CD4-positive, alpha-beta T cell (primary cell): ENCODE measurements at regions of chr7 and their contacts with region 1.

Region 1: GRCh38 chr7:109622320-109622719 is 1052.6 kb downstream of the DNAJB9 start:
- DNase-seq: no peak
- ATAC-seq: no peak
- H3K4me3 ChIP-seq: no peak overlapping the region
- H3K4me3 Mint-ChIP-seq: no peak overlapping the region
- H3K27ac ChIP-seq: no peak overlapping the region
- H3K27ac Mint-ChIP-seq: no peak overlapping the region
- H3K4me1 ChIP-seq: no peaks in the 10 kb centered on the region
- H3K4me1 Mint-ChIP-seq: no peaks in the 10 kb centered on the region
- H3K27me3 ChIP-seq: no peaks in the 10 kb centered on the region
- H3K27me3 Mint-ChIP-seq: no peaks in the 10 kb centered on the region
- CTCF ChIP-seq: no peak

Region 2: GRCh38 chr7:110534241-110534931 is 912.1 kb after region 1 on chr7:
- CTCF ChIA-PET with region 1: no interaction called
- POLR2A ChIA-PET with region 1: no interaction called
- intact Hi-C with region 1: loop called in 1 of 2 experiments (anchors 10 kb)
- DNase-seq: no peak
- ATAC-seq: no peak
- H3K4me3 ChIP-seq: no peak overlapping the region
- H3K4me3 Mint-ChIP-seq: no peak overlapping the region
- H3K27ac ChIP-seq: no peak overlapping the region
- H3K27ac Mint-ChIP-seq: no peak overlapping the region
- H3K4me1 ChIP-seq: no peaks in the 10 kb centered on the region
- H3K4me1 Mint-ChIP-seq: no peaks in the 10 kb centered on the region
- H3K27me3 ChIP-seq: no peaks in the 10 kb centered on the region
- H3K27me3 Mint-ChIP-seq: no peaks in the 10 kb centered on the region
- CTCF ChIP-seq: no peak

Region 3: GRCh38 chr7:111282626-111283025 is 1660.3 kb after region 1 on chr7:
- CTCF ChIA-PET with region 1: no interaction called
- POLR2A ChIA-PET with region 1: no interaction called
- intact Hi-C with region 1: no loop called
- DNase-seq: no peak
- ATAC-seq: no peak
- H3K4me3 ChIP-seq: no peak overlapping the region
- H3K4me3 Mint-ChIP-seq: no peak overlapping the region
- H3K27ac ChIP-seq: no peak overlapping the region
- H3K27ac Mint-ChIP-seq: no peak overlapping the region
- H3K4me1 ChIP-seq: no peaks in the 10 kb centered on the region
- H3K4me1 Mint-ChIP-seq: no peaks in the 10 kb centered on the region
- H3K27me3 ChIP-seq: no peaks in the 10 kb centered on the region
- H3K27me3 Mint-ChIP-seq: no peaks in the 10 kb centered on the region
- CTCF ChIP-seq: no peak